ENCODE measurements at regions of chr9 and their contacts with region 1.

Region 1: GRCh38 chr9:82923448-82924249 is 139.3 kb downstream of the RASEF start:
- DNase-seq: no peak
- ATAC-seq: no peak
- H3K4me3 ChIP-seq: no peak overlapping the region
- H3K27ac ChIP-seq: no peak overlapping the region
- H3K4me1 ChIP-seq: no peaks in the 10 kb centered on the region
- H3K27me3 ChIP-seq: no peaks in the 10 kb centered on the region
- CTCF ChIP-seq: no peak
- EP300 ChIP-seq: no peak
- POLR2A ChIP-seq: no peak
- RAD21 ChIP-seq: no peak

Region 2: GRCh38 chr9:82987370-82988189 is 63.9 kb after region 1 on chr9:
- CTCF ChIA-PET with region 1: no interaction called
- POLR2A ChIA-PET with region 1: no interaction called
- in situ Hi-C with region 1: no loop called
- intact Hi-C with region 1: loop called (anchors 10 kb)
- DNase-seq: no peak
- ATAC-seq: no peak
- H3K4me3 ChIP-seq: no peak overlapping the region
- H3K27ac ChIP-seq: no peak overlapping the region
- H3K4me1 ChIP-seq: no peaks in the 10 kb centered on the region
- H3K27me3 ChIP-seq: no peaks in the 10 kb centered on the region
- CTCF ChIP-seq: no peak
- EP300 ChIP-seq: no peak
- POLR2A ChIP-seq: no peak
- RAD21 ChIP-seq: no peak

Region 3: GRCh38 chr9:83027153-83027891 is 103.7 kb after region 1 on chr9:
- CTCF ChIA-PET with region 1: no interaction called
- POLR2A ChIA-PET with region 1: no interaction called
- in situ Hi-C with region 1: no loop called
- intact Hi-C with region 1: no loop called
- DNase-seq: no peak
- ATAC-seq: no peak
- H3K4me3 ChIP-seq: no peak overlapping the region
- H3K27ac ChIP-seq: no peak overlapping the region
- H3K4me1 ChIP-seq: no peaks in the 10 kb centered on the region
- H3K27me3 ChIP-seq: no peaks in the 10 kb centered on the region
- CTCF ChIP-seq: no peak
- EP300 ChIP-seq: no peak
- POLR2A ChIP-seq: no peak
- RAD21 ChIP-seq: no peak

Region 4: GRCh38 chr9:83334320-83334719 is 410.7 kb after region 1 on chr9:
- CTCF ChIA-PET with region 1: no interaction called
- POLR2A ChIA-PET with region 1: no interaction called
- in situ Hi-C with region 1: no loop called
- intact Hi-C with region 1: no loop called
- DNase-seq: peak; percentile 46 to 65 (median 54)
- ATAC-seq: peak; percentile 92
- H3K4me3 ChIP-seq: no peak overlapping the region
- H3K27ac ChIP-seq: no peak overlapping the region
- H3K4me1 ChIP-seq: no peaks in the 10 kb centered on the region
- H3K27me3 ChIP-seq: no peaks in the 10 kb centered on the region
- CTCF ChIP-seq: peak; percentile 70 to 82 (median 71)
- EP300 ChIP-seq: no peak
- POLR2A ChIP-seq: no peak
- RAD21 ChIP-seq: peak; percentile 56 to 79